Testis (tissue), 5 donors: ENCODE measurements at regions of chr3 and their contacts with region 1.

Region 1: DNA sequence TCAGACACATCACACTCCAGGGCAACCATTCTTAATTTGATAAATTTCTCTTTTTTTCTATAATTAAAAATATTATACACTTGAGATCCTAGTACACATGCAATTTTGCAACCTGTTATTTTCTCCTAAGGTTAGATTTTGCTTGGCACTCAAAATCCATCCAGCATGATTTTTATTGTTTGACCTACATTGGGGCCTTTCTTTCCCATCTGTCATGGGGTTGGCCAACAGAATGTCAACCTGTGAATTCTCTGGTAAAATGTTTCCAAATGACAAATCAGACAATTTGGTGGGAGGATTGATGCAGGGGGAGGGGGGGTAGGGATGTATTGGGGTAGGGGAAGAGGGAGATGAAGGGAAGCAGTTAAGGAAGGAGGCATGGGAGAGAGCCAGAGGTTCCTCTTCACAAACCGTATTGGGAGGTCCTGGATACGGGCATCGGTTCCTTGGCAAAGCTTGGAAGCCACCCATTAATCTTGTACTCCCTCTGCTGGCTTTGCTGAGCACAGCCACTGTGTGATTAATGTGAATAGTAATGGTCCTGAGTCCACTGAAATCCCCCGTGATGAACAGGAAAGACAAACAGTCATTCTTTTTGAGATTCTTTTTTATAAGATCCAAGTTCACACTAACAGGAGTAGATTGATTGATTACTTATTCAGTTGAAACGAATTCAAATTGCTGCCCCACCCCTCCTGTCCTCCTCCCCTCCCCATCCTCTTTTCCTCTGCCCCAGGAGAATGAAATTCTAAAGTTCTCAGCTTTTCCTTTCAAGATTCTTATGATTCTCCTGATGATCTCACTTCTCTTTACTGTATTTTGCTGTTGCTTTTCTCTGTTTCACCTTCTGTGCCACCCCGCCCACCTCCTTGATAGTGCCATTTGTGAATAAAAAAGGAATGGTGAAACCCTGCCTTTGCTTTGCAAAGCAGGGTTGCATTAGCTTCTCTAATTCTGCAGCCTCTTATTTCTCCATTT is 82.2 kb upstream of the SLC25A26 start:
- DNase-seq: peak; percentile 69
- H3K4me3 ChIP-seq: no peak overlapping the region
- H3K27ac ChIP-seq: no peak overlapping the region
- H3K4me1 ChIP-seq: no peaks in the 10 kb centered on the region
- H3K27me3 ChIP-seq: no peaks in the 10 kb centered on the region
- CTCF ChIP-seq: peak; percentile 21 to 73 (median 57)
- POLR2A ChIP-seq: no peak

Region 2: GRCh38 chr3:66053550-66054094 is 85.0 kb before region 1 on chr3:
- intact Hi-C with region 1: loop called (anchors 10 kb)
- DNase-seq: peak; percentile 21
- H3K4me3 ChIP-seq: no peak overlapping the region
- H3K27ac ChIP-seq: no peak overlapping the region
- H3K4me1 ChIP-seq: peaks cover 3% of the 10 kb centered on the region
- H3K27me3 ChIP-seq: no peaks in the 10 kb centered on the region
- CTCF ChIP-seq: no peak
- POLR2A ChIP-seq: no peak

Region 3: DNA sequence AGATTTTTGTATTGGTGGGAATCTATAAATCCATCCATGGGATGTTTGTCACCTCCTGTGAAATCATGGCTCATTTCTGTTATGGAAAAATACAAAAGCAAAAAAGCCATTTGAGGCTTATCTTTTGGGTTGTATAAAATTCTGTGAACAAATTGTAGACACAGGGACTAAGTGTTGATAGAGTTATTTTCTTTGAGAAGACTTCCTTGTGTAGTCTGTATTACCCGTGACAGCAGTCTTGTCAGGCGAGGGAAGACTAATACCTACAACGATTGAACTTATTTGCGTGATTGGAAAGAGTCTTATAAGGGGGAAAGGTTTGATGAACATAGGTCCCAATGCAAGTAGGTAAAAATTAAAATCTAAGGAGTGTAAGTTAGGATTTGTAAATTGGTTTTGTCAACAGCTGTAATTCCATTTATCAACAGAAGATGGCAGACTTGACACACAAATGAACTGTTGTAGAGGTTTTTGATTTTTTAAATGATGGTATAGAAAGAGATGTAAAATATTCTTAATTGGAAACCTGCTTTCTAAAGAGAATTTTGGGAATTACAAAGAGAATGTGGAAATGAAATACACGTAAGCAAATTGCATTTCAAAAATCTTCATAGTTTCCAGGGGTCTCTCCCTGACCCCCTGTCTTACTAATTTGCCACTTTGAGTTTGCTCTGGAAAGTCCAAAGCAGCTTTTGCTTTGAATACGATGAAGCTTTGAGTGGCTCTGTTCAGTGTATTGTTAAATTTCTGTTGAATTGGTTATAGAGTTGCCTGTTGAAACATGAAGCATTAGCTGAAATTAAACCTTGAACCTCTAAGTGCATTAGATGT is 115.4 kb after region 1 on chr3:
- intact Hi-C with region 1: no loop called
- DNase-seq: no peak
- H3K4me3 ChIP-seq: no peak overlapping the region
- H3K27ac ChIP-seq: no peak overlapping the region
- H3K4me1 ChIP-seq: no peaks in the 10 kb centered on the region
- H3K27me3 ChIP-seq: no peaks in the 10 kb centered on the region
- CTCF ChIP-seq: peak; percentile 36 to 83 (median 43)
- POLR2A ChIP-seq: no peak